ENCODE measurements at regions of chr16 and their contacts with region 1.

Region 1: DNA sequence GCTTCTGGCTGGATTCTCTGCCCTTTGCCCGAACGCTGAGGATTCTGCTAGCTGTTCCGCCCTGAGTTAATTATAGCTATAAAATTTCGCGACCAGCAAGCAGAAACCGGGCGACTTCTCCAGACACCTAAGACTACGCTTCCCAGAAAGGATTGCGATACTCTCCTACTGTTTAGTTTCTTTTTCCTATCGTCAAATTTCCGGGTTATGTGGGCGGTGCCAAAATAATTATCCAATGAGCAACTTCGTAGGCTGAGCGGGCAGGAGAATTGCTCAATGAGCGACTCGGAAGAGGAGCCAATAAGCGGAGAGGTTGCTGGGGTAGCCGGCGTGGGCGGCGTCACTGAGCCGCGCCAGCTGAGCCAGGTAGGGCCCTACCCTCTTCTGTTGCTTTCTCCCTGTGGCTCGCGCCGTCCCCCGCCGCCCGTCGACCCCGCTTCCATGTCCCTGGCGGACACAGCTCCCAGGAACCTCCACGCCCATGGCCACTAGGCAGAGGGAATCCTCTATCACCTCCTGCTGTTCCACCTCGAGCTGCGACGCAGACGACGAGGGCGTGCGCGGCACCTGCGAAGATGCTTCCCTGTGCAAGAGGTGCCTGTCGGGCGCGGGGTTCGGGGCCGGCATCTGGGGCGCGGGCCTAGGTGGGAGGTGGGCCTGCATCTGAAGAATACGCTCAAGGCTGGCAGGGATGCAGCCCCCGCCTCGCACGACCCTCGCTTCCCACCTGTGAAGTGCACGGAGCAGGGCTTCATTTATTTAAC is at the start of gene LCMT1:
- DNase-seq: peak; percentile 78
- ATAC-seq: peak; percentile 89
- H3K4me3 Mint-ChIP-seq: peak within 1 kb of the TSS; percentile 95
- H3K27ac Mint-ChIP-seq: peak within 1 kb of the TSS; percentile 94
- H3K4me1 Mint-ChIP-seq: peaks cover 41% of the 10 kb centered on the region
- H3K27me3 Mint-ChIP-seq: no peaks in the 10 kb centered on the region
- CTCF ChIP-seq: no peak
- total RNA-seq, gene LCMT1: 32.2 and 33.6 TPM in 2 replicates

Region 2: DNA sequence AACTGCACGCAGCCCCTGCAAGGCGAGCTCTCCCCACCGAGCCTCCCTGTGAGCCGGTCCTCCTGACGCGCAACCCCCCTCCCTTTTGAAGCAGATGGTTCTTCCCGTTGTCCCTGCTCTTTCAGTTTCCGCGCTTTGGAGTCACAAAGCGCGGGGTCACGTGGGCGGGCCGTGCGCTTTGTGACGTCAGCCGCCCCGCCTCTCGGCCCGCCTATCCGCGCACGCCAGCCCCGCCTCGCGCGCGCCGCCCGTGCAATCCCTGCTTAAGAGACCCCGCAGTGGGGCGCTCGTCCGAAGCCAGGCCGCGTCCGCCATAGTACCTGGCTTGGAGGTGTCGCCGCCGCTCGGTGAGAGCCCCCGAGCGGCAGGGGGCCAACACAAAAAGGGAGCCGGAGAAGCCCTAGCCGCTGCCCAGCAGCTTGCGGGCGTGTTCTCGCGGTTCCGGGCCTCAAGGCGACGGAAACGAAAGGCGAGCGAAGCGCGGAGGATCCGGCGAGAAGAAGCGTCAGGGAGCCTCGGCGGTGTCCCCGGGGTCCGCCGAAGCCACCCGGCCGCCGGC is 572.2 kb before region 1 on chr16 and contains the start of gene RBBP6:
- CTCF ChIA-PET with region 1: no interaction called
- POLR2A ChIA-PET with region 1: no interaction called
- intact Hi-C with region 1: loop called (anchors 1 kb)
- DNase-seq: peak; percentile 96
- ATAC-seq: peak; percentile 92
- H3K4me3 Mint-ChIP-seq: peak within 1 kb of the TSS; percentile 100
- H3K27ac Mint-ChIP-seq: peak within 1 kb of the TSS; percentile 100
- H3K4me1 Mint-ChIP-seq: peaks cover 43% of the 10 kb centered on the region
- H3K27me3 Mint-ChIP-seq: no peaks in the 10 kb centered on the region
- CTCF ChIP-seq: no peak
- total RNA-seq, gene RBBP6: 85.3 and 85.8 TPM in 2 replicates

Region 3: GRCh38 chr16:24729362-24729984 is 382.1 kb before region 1 on chr16 and contains the start of gene TNRC6A:
- CTCF ChIA-PET with region 1: no interaction called
- POLR2A ChIA-PET with region 1: no interaction called
- intact Hi-C with region 1: no loop called
- DNase-seq: peak; percentile 90
- ATAC-seq: peak; percentile 79
- H3K4me3 Mint-ChIP-seq: peak within 1 kb of the TSS; percentile 99
- H3K27ac Mint-ChIP-seq: peak within 1 kb of the TSS; percentile 97
- H3K4me1 Mint-ChIP-seq: peaks cover 38% of the 10 kb centered on the region
- H3K27me3 Mint-ChIP-seq: no peaks in the 10 kb centered on the region
- CTCF ChIP-seq: no peak
- total RNA-seq, gene TNRC6A: 57.9 and 68.5 TPM in 2 replicates

Region 4: DNA sequence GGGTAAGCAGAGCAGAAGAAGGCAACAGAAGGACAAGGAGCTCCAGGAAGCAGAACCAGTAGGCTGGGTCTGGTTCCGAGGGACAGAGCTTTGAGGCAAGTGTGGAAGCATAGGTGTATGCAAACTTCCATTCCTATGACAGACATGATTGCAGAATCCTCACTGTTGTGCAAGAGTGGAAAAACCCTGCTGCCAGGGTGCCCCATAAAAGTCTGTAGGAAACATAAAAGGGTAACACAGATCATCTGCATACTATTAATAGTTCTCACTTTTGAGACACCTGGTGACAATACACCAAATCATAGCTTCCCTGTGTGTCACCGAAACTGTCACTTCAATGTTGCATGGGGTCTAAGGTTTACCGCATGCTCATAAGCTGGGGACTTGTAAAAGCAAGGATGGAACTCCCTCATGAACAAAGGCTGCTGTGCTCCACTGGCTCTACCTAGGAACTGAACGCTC is 136.1 kb before region 1 on chr16:
- CTCF ChIA-PET with region 1: no interaction called
- POLR2A ChIA-PET with region 1: interaction called, 5 read pairs
- intact Hi-C with region 1: loop called (anchors 2 kb)
- DNase-seq: no peak
- ATAC-seq: peak; percentile 62
- H3K4me3 Mint-ChIP-seq: peak overlapping the region; percentile 12
- H3K27ac Mint-ChIP-seq: peak overlapping the region; percentile 96
- H3K4me1 Mint-ChIP-seq: peaks cover 83% of the 10 kb centered on the region
- H3K27me3 Mint-ChIP-seq: no peaks in the 10 kb centered on the region
- CTCF ChIP-seq: no peak

Region 5: DNA sequence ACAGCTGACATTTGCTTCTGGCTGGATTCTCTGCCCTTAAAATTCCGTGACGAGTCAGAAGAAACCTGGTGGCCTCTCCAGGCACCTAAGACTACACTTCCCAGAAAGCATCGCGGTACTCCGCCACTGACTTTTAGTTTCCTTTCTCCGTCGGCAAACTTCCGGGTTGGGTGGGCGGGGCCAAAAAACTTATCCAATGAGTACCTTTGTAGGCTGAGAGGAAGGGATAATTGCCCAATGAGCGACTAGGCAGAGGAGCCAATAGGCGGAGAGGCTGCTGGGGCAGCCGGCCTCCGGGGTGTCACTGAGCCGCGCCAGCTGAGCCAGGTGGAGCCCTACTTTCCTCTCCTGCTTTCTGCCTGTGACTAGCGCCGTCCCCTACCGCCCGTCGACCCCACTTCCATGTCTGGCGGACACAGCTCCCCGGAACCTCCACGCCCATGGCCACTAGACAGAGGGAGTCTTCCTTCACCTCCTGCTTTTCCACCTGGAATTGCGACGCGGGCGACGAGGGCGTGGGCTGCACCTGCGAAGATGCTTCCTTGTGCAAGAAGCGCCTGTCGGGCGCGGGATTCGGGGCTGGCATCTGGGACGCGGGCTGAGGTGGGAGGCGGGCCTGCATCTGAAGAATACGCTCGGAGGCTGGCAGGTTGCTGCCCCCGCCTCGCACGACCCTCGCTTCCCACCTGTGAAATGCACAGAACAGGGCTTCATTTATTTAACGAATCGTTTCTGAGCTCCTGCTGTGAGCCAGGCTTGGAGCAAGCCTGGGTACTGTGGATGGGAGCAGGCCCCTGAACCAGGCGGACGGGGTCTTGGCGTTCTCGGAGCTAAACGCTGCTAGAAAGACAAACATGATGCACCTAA is 79.9 kb before region 1 on chr16:
- CTCF ChIA-PET with region 1: no interaction called
- POLR2A ChIA-PET with region 1: interaction called, 10 read pairs
- intact Hi-C with region 1: loop called (anchors 1 kb)
- DNase-seq: peak; percentile 69
- ATAC-seq: peak; percentile 95
- H3K4me3 Mint-ChIP-seq: peak overlapping the region; percentile 95
- H3K27ac Mint-ChIP-seq: peak overlapping the region; percentile 90
- H3K4me1 Mint-ChIP-seq: peaks cover 50% of the 10 kb centered on the region
- H3K27me3 Mint-ChIP-seq: no peaks in the 10 kb centered on the region
- CTCF ChIP-seq: no peak

Region 6: DNA sequence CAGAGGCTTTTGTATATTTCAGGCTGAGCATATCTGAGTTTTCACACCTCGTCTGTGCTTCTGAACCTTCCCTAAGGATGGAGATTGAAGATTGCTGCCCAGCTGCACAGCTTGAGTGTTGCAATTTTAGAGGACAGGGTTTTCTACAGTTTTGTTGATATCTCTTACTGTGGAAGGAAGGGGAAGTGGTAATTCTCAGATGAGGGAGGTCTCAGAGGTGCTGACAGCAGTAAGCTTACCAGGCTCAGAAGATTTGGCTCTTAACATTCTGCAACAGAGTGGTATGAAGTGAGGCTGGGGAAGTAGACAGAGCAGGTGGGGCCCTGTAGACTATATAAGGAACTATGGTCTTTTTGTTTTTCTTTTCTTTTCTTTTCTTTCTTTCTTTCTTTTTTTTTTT is 50.7 kb before region 1 on chr16:
- CTCF ChIA-PET with region 1: interaction called, 32 read pairs
- POLR2A ChIA-PET with region 1: interaction called, 31 read pairs
- intact Hi-C with region 1: loop called (anchors 1 kb)
- DNase-seq: no peak
- ATAC-seq: peak; percentile 95
- H3K4me3 Mint-ChIP-seq: peak overlapping the region; percentile 41
- H3K27ac Mint-ChIP-seq: peak overlapping the region; percentile 92
- H3K4me1 Mint-ChIP-seq: peaks cover 49% of the 10 kb centered on the region
- H3K27me3 Mint-ChIP-seq: no peaks in the 10 kb centered on the region
- CTCF ChIP-seq: no peak

Region 7: GRCh38 chr16:25126820-25127232 is 15.2 kb after region 1 on chr16:
- CTCF ChIA-PET with region 1: interaction called, 3 read pairs
- POLR2A ChIA-PET with region 1: interaction called, 10 read pairs
- intact Hi-C with region 1: no loop called
- DNase-seq: no peak
- ATAC-seq: no peak
- H3K4me3 Mint-ChIP-seq: no peak overlapping the region
- H3K27ac Mint-ChIP-seq: no peak overlapping the region
- H3K4me1 Mint-ChIP-seq: peaks cover 7% of the 10 kb centered on the region
- H3K27me3 Mint-ChIP-seq: no peaks in the 10 kb centered on the region
- CTCF ChIP-seq: no peak

Region 8: DNA sequence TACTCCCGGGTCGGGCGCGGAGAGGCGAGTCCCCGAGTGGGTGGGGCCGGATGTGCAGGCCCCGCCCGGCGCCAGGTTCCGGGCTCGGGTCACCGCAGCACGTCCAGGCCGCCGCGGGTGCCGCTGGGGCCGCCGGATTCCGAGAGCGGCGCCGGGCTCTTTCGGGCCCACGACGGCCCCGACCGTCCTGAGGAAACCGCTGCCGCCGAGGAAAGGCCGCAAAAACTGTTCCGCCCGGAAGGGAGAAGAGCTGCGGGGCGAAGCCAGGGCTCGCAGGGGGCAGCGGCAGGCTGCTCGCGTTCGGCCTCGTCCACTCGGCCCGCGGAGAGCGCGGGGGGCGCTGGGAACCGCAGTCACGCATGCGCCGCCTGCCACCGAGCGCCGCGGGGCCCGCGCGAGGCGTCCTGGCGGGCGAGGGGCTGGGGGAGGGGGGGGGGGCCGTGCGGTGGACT is 145.9 kb after region 1 on chr16 and contains the start of gene ZKSCAN2:
- CTCF ChIA-PET with region 1: no interaction called
- POLR2A ChIA-PET with region 1: no interaction called
- intact Hi-C with region 1: loop called (anchors 2 kb)
- DNase-seq: peak; percentile 82
- ATAC-seq: peak; percentile 87
- H3K4me3 Mint-ChIP-seq: peak within 1 kb of the TSS; percentile 95
- H3K27ac Mint-ChIP-seq: peak within 1 kb of the TSS; percentile 93
- H3K4me1 Mint-ChIP-seq: peaks cover 46% of the 10 kb centered on the region
- H3K27me3 Mint-ChIP-seq: no peaks in the 10 kb centered on the region
- CTCF ChIP-seq: no peak
- total RNA-seq, gene ZKSCAN2: 8.3 and 10.3 TPM in 2 replicates